Thyroid gland (tissue), 4 donors: ENCODE measurements at regions of chr16 and their contacts with region 1.

Region 1: DNA sequence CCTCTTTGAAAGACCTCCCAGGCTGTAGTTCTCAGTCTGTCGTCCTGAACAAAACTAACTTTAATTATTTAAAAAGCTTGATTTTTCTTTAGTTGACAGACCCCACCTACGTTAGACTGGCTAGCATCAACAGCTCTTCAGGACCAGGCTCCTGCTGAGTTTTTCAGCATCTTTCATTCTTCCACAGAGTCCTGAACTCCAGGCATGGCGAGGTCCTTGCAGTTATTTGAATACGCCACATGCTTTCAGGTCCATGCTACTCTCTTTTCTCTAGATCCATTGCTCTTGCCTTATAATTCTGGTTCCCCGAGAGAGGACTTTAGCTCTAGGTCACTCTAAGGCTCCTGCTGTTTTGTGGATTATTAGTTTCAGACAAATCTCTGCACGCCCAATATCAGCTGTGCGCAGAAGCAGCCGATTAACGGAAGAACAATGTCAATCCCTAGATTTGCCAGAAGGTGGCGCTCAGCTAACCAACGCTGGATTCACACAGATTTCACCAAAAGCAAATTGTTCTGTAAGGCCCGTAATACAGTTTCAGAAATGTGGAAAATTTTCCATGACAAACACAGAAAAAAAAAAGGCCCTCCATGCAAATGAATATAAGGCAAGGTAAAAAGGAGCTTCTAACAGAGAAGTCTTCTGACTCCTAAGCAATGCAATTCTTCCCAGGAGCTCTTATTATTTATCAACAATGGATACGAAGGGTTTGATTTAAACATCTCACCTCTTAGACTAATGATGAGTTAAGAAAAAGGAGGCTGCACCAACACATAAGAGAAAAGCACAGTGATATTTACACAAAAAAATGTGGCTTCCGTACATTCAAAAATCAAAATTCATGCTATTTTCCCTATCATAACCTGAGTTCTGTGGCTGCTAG is 33.5 kb upstream of the BCO1 start:
- DNase-seq: peak in 1 of 2 donors; percentile 49
- H3K4me3 ChIP-seq: no peak overlapping the region
- H3K27ac ChIP-seq: no peak overlapping the region
- H3K4me1 ChIP-seq: no peaks in the 10 kb centered on the region
- H3K27me3 ChIP-seq: no peaks in the 10 kb centered on the region
- CTCF ChIP-seq: peak; percentile 25 to 77 (median 66)
- POLR2A ChIP-seq: no peak

Region 2: DNA sequence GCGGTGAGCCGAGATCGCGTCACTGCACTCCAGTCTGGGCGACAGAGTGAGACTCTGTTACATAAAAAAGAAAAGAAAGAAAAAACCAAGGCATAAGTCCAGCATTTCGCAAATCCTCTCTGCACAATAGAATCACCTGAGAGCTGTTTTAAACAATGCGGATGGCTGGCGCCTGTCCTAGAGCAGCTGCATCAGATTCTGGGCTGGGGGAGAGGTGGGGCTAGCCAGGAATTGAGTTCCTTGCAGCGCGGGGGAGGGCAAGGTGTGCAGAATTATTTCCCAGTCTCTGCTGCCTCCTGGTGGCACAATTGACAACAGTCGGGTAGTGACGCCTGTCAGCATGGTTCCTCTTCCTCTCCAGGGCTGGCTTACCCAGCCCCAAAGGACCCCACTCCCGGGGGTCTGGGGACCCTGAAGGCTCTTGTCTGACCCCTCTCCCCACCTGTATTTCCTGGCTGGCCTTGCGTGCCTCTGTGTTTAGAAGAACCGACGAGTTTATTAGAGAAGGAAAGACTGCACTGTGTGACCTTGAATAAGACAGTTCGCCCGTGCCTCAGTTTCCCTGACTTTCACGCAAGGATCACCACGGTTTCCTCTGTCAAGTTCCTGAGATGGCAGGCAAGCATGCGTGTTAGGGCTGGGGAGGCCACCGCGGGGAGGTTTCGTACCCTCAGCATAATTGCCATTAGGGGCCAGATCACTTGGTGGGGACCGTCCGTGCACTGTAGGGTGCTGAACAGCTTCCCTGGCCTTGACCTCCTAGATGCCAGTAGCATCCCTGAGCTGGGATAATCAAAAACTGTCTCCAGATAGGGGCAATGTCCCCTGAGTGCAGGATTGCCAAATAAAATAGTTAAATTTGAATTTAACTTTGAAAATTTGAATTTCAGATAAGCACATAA is 533.1 kb after region 1 on chr16:
- intact Hi-C with region 1: loop called (anchors 5 kb)
- DNase-seq: peak; percentile 93
- H3K4me3 ChIP-seq: no peak overlapping the region
- H3K27ac ChIP-seq: peak overlapping the region in 2 of 3 donors; percentile 57 to 74
- H3K4me1 ChIP-seq: peaks cover 0 to 5% of the 10 kb centered on the region in 2 donors
- H3K27me3 ChIP-seq: no peaks in the 10 kb centered on the region
- CTCF ChIP-seq: peak; percentile 38 to 97 (median 84)
- POLR2A ChIP-seq: no peak